ENCODE measurements at regions of chr3 and their contacts with region 1.

Region 1: GRCh38 chr3:50121416-50122032 is 32.8 kb downstream of the RBM5 start:
- DNase-seq: peak; percentile 56 to 68 (median 61)
- H3K4me3 ChIP-seq: no peak overlapping the region
- H3K4me3 Mint-ChIP-seq: no peak overlapping the region
- H3K27ac ChIP-seq: peak overlapping the region in 1 of 2 donors; percentile 6
- H3K27ac Mint-ChIP-seq: peak overlapping the region in 1 of 7 donors; percentile 45
- H3K4me1 ChIP-seq: no peaks in the 10 kb centered on the region
- H3K4me1 Mint-ChIP-seq: no peaks in the 10 kb centered on the region
- H3K27me3 ChIP-seq: no peaks in the 10 kb centered on the region
- H3K27me3 Mint-ChIP-seq: peaks cover 0 to 4% (median 2%) of the 10 kb centered on the region in 3 donors
- CTCF ChIP-seq: peak; percentile 88

Region 2: DNA sequence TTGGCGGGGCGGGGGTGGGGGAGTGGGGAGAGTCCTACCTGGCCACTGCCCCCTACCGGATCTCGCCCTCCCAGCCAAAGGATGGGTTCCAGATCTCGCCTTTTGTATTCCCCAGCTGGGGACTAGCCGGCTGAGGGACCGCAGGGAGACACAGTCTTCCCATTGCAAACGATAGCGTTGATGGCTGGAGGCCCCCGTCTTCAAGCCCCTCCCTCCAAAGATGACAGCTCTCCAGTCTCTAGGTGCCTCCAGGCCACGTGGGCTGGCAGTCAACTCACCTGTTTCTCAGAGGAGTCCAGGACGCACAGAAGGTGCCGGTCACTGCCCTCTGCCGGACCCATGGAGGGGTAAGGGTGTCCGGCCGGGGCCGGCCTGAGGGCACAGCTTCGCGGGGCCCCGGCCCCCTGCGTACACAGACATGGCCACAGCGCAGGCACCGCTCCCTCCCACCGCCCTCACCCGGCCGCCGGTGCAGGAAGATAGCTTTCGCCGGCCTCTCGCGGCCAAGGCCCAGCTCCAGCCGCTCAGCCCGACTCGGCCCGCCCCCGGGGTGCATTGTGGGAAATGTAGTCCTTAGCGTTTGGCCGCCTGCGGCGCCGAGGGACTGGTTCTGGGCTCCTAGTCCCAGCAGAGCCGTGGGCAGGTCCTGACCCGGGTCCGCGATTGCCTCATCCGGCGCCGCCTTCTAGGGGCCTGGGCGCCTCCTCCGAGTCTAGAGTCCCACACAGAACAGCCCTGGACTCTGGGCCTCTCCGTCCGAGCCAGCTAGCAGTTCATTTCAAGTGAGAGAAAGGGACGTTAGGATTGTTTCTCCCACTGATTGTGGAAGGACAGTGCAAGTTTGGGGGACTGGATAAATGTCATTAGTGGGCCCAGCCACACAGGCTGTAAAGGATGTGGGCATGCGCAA is 191.9 kb before region 1 on chr3 and contains the start of gene MON1A:
- intact Hi-C with region 1: no loop called
- DNase-seq: peak; percentile 74 to 81 (median 76)
- H3K4me3 ChIP-seq: peak within 1 kb of the TSS; percentile 84 to 98 (median 84)
- H3K4me3 Mint-ChIP-seq: peak within 1 kb of the TSS; percentile 82 to 93
- H3K27ac ChIP-seq: peak within 1 kb of the TSS; percentile 47 to 81
- H3K27ac Mint-ChIP-seq: peak within 1 kb of the TSS; percentile 50 to 88 (median 85)
- H3K4me1 ChIP-seq: peaks cover 31 to 36% of the 10 kb centered on the region in 2 donors
- H3K4me1 Mint-ChIP-seq: peaks cover 30% of the 10 kb centered on the region
- H3K27me3 ChIP-seq: no peaks in the 10 kb centered on the region
- H3K27me3 Mint-ChIP-seq: peaks cover 0 to 3% (median 2%) of the 10 kb centered on the region in 3 donors
- CTCF ChIP-seq: peak; percentile 7
- polyA plus RNA-seq, gene MON1A: 5.4 to 6.6 (median 6.1) TPM

Region 3: GRCh38 chr3:50192689-50193141 is 71.2 kb after region 1 on chr3:
- intact Hi-C with region 1: loop called in 1 of 2 experiments (anchors 2 kb)
- DNase-seq: peak; percentile 44 to 70 (median 62)
- H3K4me3 ChIP-seq: no peak overlapping the region
- H3K4me3 Mint-ChIP-seq: peak overlapping the region in 1 of 2 donors; percentile 55
- H3K27ac ChIP-seq: no peak overlapping the region
- H3K27ac Mint-ChIP-seq: peak overlapping the region in 1 of 7 donors; percentile 50
- H3K4me1 ChIP-seq: peaks cover 25 to 37% of the 10 kb centered on the region in 2 donors
- H3K4me1 Mint-ChIP-seq: peaks cover 27% of the 10 kb centered on the region
- H3K27me3 ChIP-seq: peaks cover 15 to 37% of the 10 kb centered on the region in 2 donors
- H3K27me3 Mint-ChIP-seq: peaks cover 36 to 47% (median 44%) of the 10 kb centered on the region in 3 donors
- CTCF ChIP-seq: peak; percentile 97

Region 4: GRCh38 chr3:50221411-50222168 is 100.1 kb after region 1 on chr3:
- intact Hi-C with region 1: loop called (anchors 1 to 5 kb)
- DNase-seq: peak in 1 of 3 donors; percentile 62
- H3K4me3 ChIP-seq: no peak overlapping the region
- H3K4me3 Mint-ChIP-seq: no peak overlapping the region
- H3K27ac ChIP-seq: no peak overlapping the region
- H3K27ac Mint-ChIP-seq: no peak overlapping the region
- H3K4me1 ChIP-seq: peaks cover 7 to 8% of the 10 kb centered on the region in 2 donors
- H3K4me1 Mint-ChIP-seq: peaks cover 8% of the 10 kb centered on the region
- H3K27me3 ChIP-seq: peaks cover 0 to 8% of the 10 kb centered on the region in 2 donors
- H3K27me3 Mint-ChIP-seq: peaks cover 14 to 30% (median 27%) of the 10 kb centered on the region in 3 donors
- CTCF ChIP-seq: no peak

Region 5: GRCh38 chr3:50272911-50273693 is 151.6 kb after region 1 on chr3:
- intact Hi-C with region 1: loop called (anchors 2 to 5 kb)
- DNase-seq: peak; percentile 81 to 87 (median 85)
- H3K4me3 ChIP-seq: peak overlapping the region; percentile 16 to 72 (median 32)
- H3K4me3 Mint-ChIP-seq: peak overlapping the region; percentile 82 to 93
- H3K27ac ChIP-seq: peak overlapping the region in 1 of 2 donors; percentile 20
- H3K27ac Mint-ChIP-seq: peak overlapping the region in 4 of 7 donors; percentile 43 to 86 (median 77)
- H3K4me1 ChIP-seq: peaks cover 16 to 34% of the 10 kb centered on the region in 2 donors
- H3K4me1 Mint-ChIP-seq: peaks cover 26% of the 10 kb centered on the region
- H3K27me3 ChIP-seq: peaks cover 24 to 47% of the 10 kb centered on the region in 2 donors
- H3K27me3 Mint-ChIP-seq: peaks cover 51 to 66% (median 64%) of the 10 kb centered on the region in 3 donors
- CTCF ChIP-seq: peak; percentile 96

Region 6: DNA sequence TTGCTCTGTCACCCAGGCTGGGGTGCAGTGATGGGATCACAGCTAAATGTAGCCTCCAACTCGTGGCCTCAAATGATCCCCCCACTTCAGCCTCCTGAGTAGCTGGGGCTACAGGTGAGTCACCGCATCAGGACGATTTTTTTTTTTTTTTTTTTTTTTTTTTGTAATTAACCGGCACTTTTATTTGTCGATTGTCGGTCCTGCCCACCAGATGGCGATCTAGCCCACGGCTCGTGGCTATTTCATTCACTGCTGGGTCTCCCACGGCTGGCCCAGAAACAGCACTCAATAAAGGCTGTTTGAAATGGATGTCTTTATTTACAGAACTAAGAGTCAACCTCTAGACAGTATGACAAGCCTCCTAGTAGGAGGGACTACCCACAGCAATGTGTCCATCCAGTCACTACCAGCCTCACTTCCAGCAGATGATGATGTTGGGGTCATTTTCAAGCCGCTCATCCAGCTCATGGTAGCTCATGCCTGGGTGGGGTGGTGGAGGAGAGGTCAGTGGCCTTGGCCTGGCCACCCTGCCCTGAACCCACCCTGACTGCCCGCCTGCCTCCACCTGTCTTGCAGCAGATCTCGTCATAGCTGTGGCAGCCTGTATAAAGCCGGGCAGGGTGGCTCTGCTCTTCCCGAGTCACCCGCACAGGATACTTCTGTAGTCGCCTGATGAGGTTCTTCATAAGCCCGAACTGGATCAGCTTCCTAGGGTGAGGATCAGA is 225.8 kb after region 1 on chr3:
- intact Hi-C with region 1: no loop called
- DNase-seq: peak; percentile 71 to 81 (median 79)
- H3K4me3 ChIP-seq: no peak overlapping the region
- H3K4me3 Mint-ChIP-seq: no peak overlapping the region
- H3K27ac ChIP-seq: no peak overlapping the region
- H3K27ac Mint-ChIP-seq: peak overlapping the region in 3 of 7 donors; percentile 65 to 81 (median 80)
- H3K4me1 ChIP-seq: peaks cover 54 to 75% of the 10 kb centered on the region in 2 donors
- H3K4me1 Mint-ChIP-seq: peaks cover 72% of the 10 kb centered on the region
- H3K27me3 ChIP-seq: no peaks in the 10 kb centered on the region
- H3K27me3 Mint-ChIP-seq: no peaks in the 10 kb centered on the region
- CTCF ChIP-seq: peak; percentile 72

Region 7: DNA sequence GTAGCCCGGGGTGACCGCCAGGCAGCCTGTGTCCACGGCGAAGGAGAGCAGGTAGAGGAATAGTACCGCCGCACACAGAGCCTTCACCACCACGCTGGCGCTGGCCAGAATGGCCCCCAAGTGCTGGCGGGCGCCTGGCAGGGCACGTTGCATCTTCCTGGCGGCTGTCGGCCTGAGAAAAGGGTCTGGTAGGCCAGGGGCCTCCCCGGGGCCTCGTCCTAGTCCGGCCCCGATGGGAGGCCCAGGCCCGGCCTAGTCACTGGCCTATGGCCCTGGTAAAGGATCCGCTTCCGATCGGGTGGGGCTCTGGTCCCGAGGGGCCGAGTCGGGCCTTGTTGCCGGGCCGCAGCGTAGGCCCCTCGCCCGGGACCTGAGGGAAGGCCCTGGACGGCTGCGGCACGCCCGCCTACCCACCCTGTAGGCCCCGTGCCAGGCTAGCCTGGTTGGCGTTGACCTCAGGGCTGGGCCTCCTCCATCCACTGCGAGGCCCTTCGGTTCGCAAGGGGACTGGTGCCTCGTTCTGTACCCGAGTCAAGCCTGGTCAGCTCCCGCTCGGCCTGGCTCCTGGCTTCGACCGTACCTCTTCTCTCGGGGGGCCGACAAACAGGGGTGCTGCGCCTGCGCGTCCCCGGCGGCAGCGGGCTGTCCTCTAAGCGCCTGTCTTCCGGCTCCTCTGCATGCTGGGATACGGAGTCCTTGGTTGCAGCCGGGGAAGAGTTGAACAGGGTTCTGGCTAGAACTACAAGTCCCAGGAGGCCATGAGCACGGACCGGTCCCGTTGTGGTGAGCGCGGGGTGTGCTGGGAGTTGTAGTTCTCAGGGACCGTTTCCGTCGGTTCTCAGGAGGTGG is 237.6 kb after region 1 on chr3 and contains the start of gene TMEM115:
- intact Hi-C with region 1: no loop called
- DNase-seq: peak; percentile 94 to 97 (median 96)
- H3K4me3 ChIP-seq: peak within 1 kb of the TSS; percentile 47 to 91 (median 89)
- H3K4me3 Mint-ChIP-seq: peak within 1 kb of the TSS; percentile 90 to 95
- H3K27ac ChIP-seq: peak within 1 kb of the TSS; percentile 57 to 91
- H3K27ac Mint-ChIP-seq: peak within 1 kb of the TSS; percentile 82 to 95 (median 93)
- H3K4me1 ChIP-seq: peaks cover 42 to 45% of the 10 kb centered on the region in 2 donors
- H3K4me1 Mint-ChIP-seq: peaks cover 45% of the 10 kb centered on the region
- H3K27me3 ChIP-seq: peaks cover 0 to 2% of the 10 kb centered on the region in 2 donors
- H3K27me3 Mint-ChIP-seq: peaks cover 0 to 5% (median 1%) of the 10 kb centered on the region in 3 donors
- CTCF ChIP-seq: no peak
- polyA plus RNA-seq, gene TMEM115: 14.5 to 36.2 (median 32.9) TPM

Region 8: GRCh38 chr3:51106242-51106876 is 984.8 kb after region 1 on chr3:
- intact Hi-C with region 1: no loop called
- DNase-seq: no peak
- H3K4me3 ChIP-seq: no peak overlapping the region
- H3K4me3 Mint-ChIP-seq: no peak overlapping the region
- H3K27ac ChIP-seq: no peak overlapping the region
- H3K27ac Mint-ChIP-seq: peak overlapping the region in 1 of 7 donors; percentile 25
- H3K4me1 ChIP-seq: no peaks in the 10 kb centered on the region
- H3K4me1 Mint-ChIP-seq: no peaks in the 10 kb centered on the region
- H3K27me3 ChIP-seq: no peaks in the 10 kb centered on the region
- H3K27me3 Mint-ChIP-seq: peaks cover 0 to 6% (median 4%) of the 10 kb centered on the region in 3 donors
- CTCF ChIP-seq: no peak

Measured in CD14-positive monocyte (primary cell).